ENCODE measurements at regions of chr6 and their contacts with region 1.

Region 1: GRCh38 chr6:28080631-28081485 is 490 bp downstream of the ZNF165 start:
- DNase-seq: peak; percentile 92 to 94 (median 93)
- H3K4me3 ChIP-seq: peak overlapping the region; percentile 90 to 94
- H3K4me3 Mint-ChIP-seq: peak overlapping the region; percentile 90 to 99 (median 98)
- H3K27ac ChIP-seq: peak overlapping the region; percentile 92
- H3K27ac Mint-ChIP-seq: peak overlapping the region; percentile 97 to 100 (median 99)
- H3K4me1 ChIP-seq: peaks cover 12% of the 10 kb centered on the region
- H3K4me1 Mint-ChIP-seq: peaks cover 9 to 22% (median 14%) of the 10 kb centered on the region in 4 donors
- H3K27me3 ChIP-seq: no peaks in the 10 kb centered on the region
- H3K27me3 Mint-ChIP-seq: no peaks in the 10 kb centered on the region

Region 2: GRCh38 chr6:27388293-27389197 is 692.3 kb before region 1 on chr6 and contains the start of gene ZNF391:
- CTCF ChIA-PET with region 1: no interaction called
- POLR2A ChIA-PET with region 1: no interaction called
- intact Hi-C with region 1: loop called (anchors 5 kb)
- DNase-seq: peak; percentile 50 to 71 (median 62)
- H3K4me3 ChIP-seq: peak within 1 kb of the TSS; percentile 62 to 95
- H3K4me3 Mint-ChIP-seq: peak within 1 kb of the TSS; percentile 94 to 99 (median 97)
- H3K27ac ChIP-seq: peak within 1 kb of the TSS; percentile 43
- H3K27ac Mint-ChIP-seq: peak within 1 kb of the TSS; percentile 74 to 95 (median 91)
- H3K4me1 ChIP-seq: peaks cover 14% of the 10 kb centered on the region
- H3K4me1 Mint-ChIP-seq: peaks cover 7 to 23% (median 16%) of the 10 kb centered on the region in 4 donors
- H3K27me3 ChIP-seq: no peaks in the 10 kb centered on the region
- H3K27me3 Mint-ChIP-seq: peaks cover 0 to 1% of the 10 kb centered on the region in 2 donors
- total RNA-seq, gene ZNF391: 3.3 to 3.7 TPM

Region 3: GRCh38 chr6:27902335-27903314 is 178.2 kb before region 1 on chr6:
- CTCF ChIA-PET with region 1: no interaction called
- POLR2A ChIA-PET with region 1: no interaction called
- intact Hi-C with region 1: loop called (anchors 1 kb)
- DNase-seq: peak; percentile 87 to 91 (median 90)
- H3K4me3 ChIP-seq: peak overlapping the region; percentile 53
- H3K4me3 Mint-ChIP-seq: peak overlapping the region; percentile 87 to 98 (median 90)
- H3K27ac ChIP-seq: peak overlapping the region; percentile 51
- H3K27ac Mint-ChIP-seq: peak overlapping the region; percentile 94 to 100 (median 97)
- H3K4me1 ChIP-seq: peaks cover 5% of the 10 kb centered on the region
- H3K4me1 Mint-ChIP-seq: peaks cover 0 to 12% (median 4%) of the 10 kb centered on the region in 4 donors
- H3K27me3 ChIP-seq: peaks cover 4% of the 10 kb centered on the region
- H3K27me3 Mint-ChIP-seq: peaks cover 8 to 10% of the 10 kb centered on the region in 2 donors

Region 4: GRCh38 chr6:28136585-28137504 is 56.0 kb after region 1 on chr6:
- CTCF ChIA-PET with region 1: no interaction called
- POLR2A ChIA-PET with region 1: interaction called, 7 read pairs
- intact Hi-C with region 1: loop called (anchors 1 kb)
- DNase-seq: peak; percentile 54 to 76 (median 62)
- H3K4me3 ChIP-seq: peak overlapping the region; percentile 64 to 96
- H3K4me3 Mint-ChIP-seq: peak overlapping the region; percentile 92 to 99 (median 94)
- H3K27ac ChIP-seq: peak overlapping the region; percentile 98
- H3K27ac Mint-ChIP-seq: peak overlapping the region; percentile 95 to 100 (median 98)
- H3K4me1 ChIP-seq: peaks cover 51% of the 10 kb centered on the region
- H3K4me1 Mint-ChIP-seq: peaks cover 52 to 88% (median 68%) of the 10 kb centered on the region in 4 donors
- H3K27me3 ChIP-seq: no peaks in the 10 kb centered on the region
- H3K27me3 Mint-ChIP-seq: no peaks in the 10 kb centered on the region

Region 5: DNA sequence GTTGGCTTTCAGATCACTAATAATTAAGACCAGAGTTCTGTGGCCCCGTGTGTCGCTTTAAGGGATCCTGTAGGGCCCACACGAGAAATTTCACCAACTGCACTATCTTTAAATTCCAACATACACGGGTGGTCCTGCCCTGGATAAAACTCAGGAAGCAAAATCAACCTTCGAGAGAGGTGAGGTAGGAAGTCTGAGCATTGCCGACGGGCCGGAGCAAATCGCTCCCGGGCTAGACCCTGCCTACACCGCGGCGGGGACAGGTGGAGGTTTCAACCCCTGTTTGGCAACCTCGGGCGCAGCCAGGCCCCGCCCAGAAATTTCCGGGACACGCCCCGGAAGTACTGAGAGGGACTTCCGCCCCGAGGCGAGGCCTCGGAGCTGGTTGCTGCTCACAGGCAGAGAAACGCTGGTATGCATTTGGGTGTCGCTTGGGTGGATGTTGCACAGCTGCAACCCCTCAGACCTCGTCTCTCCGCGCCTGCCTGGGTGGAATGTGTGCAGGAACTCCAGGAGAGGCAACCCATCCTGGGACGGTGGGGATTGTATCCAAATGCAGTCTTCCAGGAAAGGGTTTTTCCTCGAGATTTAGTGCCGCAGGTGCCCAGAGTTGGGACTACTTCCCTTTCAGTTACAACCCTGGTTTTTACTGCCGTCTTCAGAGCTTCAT is 80.7 kb after region 1 on chr6:
- CTCF ChIA-PET with region 1: no interaction called
- POLR2A ChIA-PET with region 1: no interaction called
- intact Hi-C with region 1: no loop called
- DNase-seq: peak; percentile 77 to 84 (median 81)
- H3K4me3 ChIP-seq: peak overlapping the region in 1 of 2 donors; percentile 48
- H3K4me3 Mint-ChIP-seq: peak overlapping the region; percentile 63 to 84 (median 80)
- H3K27ac ChIP-seq: no peak overlapping the region
- H3K27ac Mint-ChIP-seq: peak overlapping the region in 4 of 7 donors; percentile 33 to 70 (median 64)
- H3K4me1 ChIP-seq: peaks cover 9% of the 10 kb centered on the region
- H3K4me1 Mint-ChIP-seq: peaks cover 6 to 18% (median 15%) of the 10 kb centered on the region in 4 donors
- H3K27me3 ChIP-seq: no peaks in the 10 kb centered on the region
- H3K27me3 Mint-ChIP-seq: peaks cover 0 to 4% of the 10 kb centered on the region in 2 donors

Region 6: DNA sequence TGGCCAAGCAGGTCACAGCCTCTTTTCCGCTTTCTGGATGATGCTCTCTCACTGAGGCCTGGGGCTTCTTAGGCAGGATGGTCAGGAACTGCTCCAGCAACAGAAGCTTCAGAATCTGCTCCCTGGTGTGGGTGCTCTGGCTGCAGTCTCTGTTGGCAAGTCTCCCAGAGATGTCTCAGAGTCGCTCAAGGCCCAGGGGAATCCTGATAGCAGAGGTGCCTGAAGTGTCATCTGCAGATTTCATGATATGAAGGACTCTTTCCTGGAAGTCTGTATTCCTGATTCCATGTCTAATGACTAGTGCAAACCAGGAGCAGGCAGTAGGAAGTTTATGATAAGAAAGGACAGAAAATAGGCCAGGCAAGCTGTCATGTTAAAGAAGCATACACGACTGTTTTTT is 234.8 kb after region 1 on chr6:
- CTCF ChIA-PET with region 1: no interaction called
- POLR2A ChIA-PET with region 1: no interaction called
- intact Hi-C with region 1: no loop called
- DNase-seq: no peak
- H3K4me3 ChIP-seq: no peak overlapping the region
- H3K4me3 Mint-ChIP-seq: no peak overlapping the region
- H3K27ac ChIP-seq: no peak overlapping the region
- H3K27ac Mint-ChIP-seq: no peak overlapping the region
- H3K4me1 ChIP-seq: no peaks in the 10 kb centered on the region
- H3K4me1 Mint-ChIP-seq: no peaks in the 10 kb centered on the region
- H3K27me3 ChIP-seq: peaks cover 3% of the 10 kb centered on the region
- H3K27me3 Mint-ChIP-seq: peaks cover 25 to 26% of the 10 kb centered on the region in 2 donors

Region 7: GRCh38 chr6:28335564-28336283 is 254.9 kb after region 1 on chr6 and contains the start of gene ZSCAN31:
- CTCF ChIA-PET with region 1: no interaction called
- POLR2A ChIA-PET with region 1: no interaction called
- intact Hi-C with region 1: loop called (anchors 1 kb)
- DNase-seq: peak; percentile 77 to 93 (median 81)
- H3K4me3 ChIP-seq: peak within 1 kb of the TSS; percentile 61 to 85
- H3K4me3 Mint-ChIP-seq: peak within 1 kb of the TSS in 1 of 8 donors; percentile 34
- H3K27ac ChIP-seq: peak within 1 kb of the TSS; percentile 87
- H3K27ac Mint-ChIP-seq: peak within 1 kb of the TSS in 1 of 7 donors; percentile 68
- H3K4me1 ChIP-seq: peaks cover 17% of the 10 kb centered on the region
- H3K4me1 Mint-ChIP-seq: peaks cover 0 to 4% (median 3%) of the 10 kb centered on the region in 4 donors
- H3K27me3 ChIP-seq: no peaks in the 10 kb centered on the region
- H3K27me3 Mint-ChIP-seq: peaks cover 0 to 3% of the 10 kb centered on the region in 2 donors
- total RNA-seq, gene ZSCAN31: 0.73 to 0.97 TPM